ENCODE measurements at regions of chr18 and their contacts with region 1.

Region 1: GRCh38 chr18:36217348-36217747 is 30.1 kb downstream of the MOCOS start:
- DNase-seq: no peak
- H3K4me3 ChIP-seq: no peak overlapping the region
- H3K27ac ChIP-seq: no peak overlapping the region
- H3K4me1 ChIP-seq: no peaks in the 10 kb centered on the region
- H3K27me3 ChIP-seq: no peaks in the 10 kb centered on the region
- CTCF ChIP-seq: no peak

Region 2: DNA sequence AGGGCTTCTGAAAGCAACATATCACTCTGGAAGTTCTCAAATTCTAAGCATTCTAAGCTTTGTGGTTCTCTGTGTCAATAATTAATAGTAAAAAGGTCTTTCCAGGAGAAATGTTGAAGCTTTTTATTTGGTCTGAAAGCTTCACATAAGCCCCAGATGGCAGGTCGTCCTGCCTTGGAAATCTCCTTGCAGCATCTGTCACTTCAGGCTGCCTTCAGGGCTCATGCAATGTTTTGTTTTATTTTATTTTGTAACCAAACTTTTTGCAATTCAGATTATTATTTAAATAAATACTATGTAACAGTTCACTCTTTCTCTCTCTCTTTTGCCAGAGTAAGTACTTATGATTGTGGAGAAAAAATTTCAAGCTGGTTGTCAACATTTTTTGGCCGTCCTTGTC is 33.5 kb after region 1 on chr18:
- CTCF ChIA-PET with region 1: no interaction called
- dilution Hi-C with region 1: loop called (anchors 5 kb)
- in situ Hi-C with region 1: no loop called
- intact Hi-C with region 1: no loop called
- DNase-seq: no peak
- H3K4me3 ChIP-seq: no peak overlapping the region
- H3K27ac ChIP-seq: no peak overlapping the region
- H3K4me1 ChIP-seq: no peaks in the 10 kb centered on the region
- H3K27me3 ChIP-seq: no peaks in the 10 kb centered on the region
- CTCF ChIP-seq: no peak

Region 3: DNA sequence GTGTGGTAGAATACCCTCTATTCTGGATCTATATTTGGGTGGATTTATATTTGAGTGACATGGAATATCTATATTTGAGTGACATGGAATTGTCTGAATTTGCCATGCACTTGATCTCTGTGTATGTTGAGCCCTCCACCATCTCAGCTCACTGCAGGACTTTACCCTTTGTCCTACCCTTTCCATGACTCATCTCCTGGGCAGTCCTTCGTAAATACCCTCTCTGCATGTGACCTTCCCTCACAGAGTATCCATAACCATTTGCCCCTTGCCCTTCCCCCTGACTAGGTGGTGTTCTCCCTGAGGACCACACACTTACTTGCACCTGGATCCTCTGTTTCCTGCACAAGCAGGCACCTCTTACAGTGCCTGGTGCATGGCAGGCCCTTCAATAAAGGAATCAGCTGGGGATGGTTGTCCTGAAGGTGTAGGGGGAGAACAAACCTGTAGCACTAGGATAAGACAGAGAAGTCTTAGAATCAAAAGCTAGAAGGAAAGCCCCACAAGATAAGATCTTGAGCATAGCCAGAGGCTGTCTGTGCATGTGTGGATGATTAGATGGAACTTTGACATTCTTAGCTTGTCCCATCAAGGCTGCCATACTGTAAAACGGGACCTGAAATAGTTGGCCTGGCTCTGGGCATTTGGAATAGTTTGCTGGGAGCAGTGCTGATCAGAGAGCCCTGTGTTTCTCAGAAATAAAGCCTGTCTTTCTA is 310.6 kb after region 1 on chr18:
- CTCF ChIA-PET with region 1: no interaction called
- dilution Hi-C with region 1: no loop called
- in situ Hi-C with region 1: no loop called
- intact Hi-C with region 1: no loop called
- DNase-seq: no peak
- H3K4me3 ChIP-seq: no peak overlapping the region
- H3K27ac ChIP-seq: no peak overlapping the region
- H3K4me1 ChIP-seq: peaks cover 6% of the 10 kb centered on the region
- H3K27me3 ChIP-seq: no peaks in the 10 kb centered on the region
- CTCF ChIP-seq: no peak